MCF 10A (cell line): ENCODE measurements at regions of chr16 and their contacts with region 1.

Region 1: DNA sequence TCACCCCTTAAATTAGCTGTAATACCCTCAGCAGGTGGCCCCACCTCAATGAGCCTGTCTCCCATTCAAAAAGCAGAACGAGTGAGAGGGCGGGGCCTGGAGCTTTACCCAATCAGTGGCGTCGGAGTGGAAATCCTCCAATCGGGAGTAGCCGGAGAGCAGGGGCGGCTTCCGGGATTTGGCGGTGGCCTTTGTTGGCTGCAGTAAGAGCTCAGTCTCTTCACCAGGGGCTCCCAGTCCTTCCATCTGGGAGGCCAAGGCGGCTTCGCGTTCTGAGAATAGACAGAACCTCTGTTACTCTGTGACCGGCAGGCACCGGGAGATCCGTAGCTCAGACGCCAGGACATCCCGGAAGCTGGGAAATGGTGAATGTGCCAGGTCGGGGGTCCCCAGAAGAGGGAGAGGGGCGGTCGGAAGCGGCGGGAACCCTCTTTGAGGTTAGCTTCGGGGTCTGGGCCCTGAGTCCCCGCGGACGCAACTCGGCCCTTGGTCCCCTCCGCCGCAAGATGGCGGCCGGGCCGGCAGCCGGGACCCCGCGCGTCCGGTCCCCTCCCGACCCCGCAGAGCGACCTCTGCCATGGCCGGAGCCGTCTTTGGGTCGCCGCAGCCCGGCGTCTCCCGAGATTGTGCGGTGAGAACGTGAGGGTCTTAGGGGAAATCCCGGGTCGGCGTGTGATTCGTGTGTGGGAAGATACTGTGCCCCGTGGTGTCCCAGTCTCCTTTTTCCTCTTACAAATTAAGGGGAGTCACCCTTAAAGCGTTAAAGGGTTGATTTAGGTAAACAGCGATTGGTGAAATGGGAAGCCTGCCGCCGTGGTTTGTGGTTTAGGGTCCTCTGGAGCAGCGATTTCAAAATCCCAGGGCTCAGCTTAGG is 160.3 kb upstream of the ZNF267 start:
- DNase-seq: peak; percentile 95
- H3K4me3 Mint-ChIP-seq: peak overlapping the region; percentile 96
- H3K27ac Mint-ChIP-seq: peak overlapping the region; percentile 99
- H3K4me1 Mint-ChIP-seq: peaks cover 17% of the 10 kb centered on the region
- H3K27me3 Mint-ChIP-seq: no peaks in the 10 kb centered on the region
- CTCF ChIP-seq: no peak

Region 2: GRCh38 chr16:31507929-31508705 is 205.2 kb before region 1 on chr16 and contains the start of gene RUSF1:
- CTCF ChIA-PET with region 1: no interaction called
- POLR2A ChIA-PET with region 1: interaction called, 10 read pairs
- intact Hi-C with region 1: loop called (anchors 2 kb)
- DNase-seq: peak; percentile 84
- H3K4me3 Mint-ChIP-seq: peak within 1 kb of the TSS; percentile 88
- H3K27ac Mint-ChIP-seq: peak within 1 kb of the TSS; percentile 98
- H3K4me1 Mint-ChIP-seq: peaks cover 22% of the 10 kb centered on the region
- H3K27me3 Mint-ChIP-seq: no peaks in the 10 kb centered on the region
- CTCF ChIP-seq: no peak
- total RNA-seq, gene RUSF1: 72.0 and 88.8 TPM in 2 replicates

Region 3: DNA sequence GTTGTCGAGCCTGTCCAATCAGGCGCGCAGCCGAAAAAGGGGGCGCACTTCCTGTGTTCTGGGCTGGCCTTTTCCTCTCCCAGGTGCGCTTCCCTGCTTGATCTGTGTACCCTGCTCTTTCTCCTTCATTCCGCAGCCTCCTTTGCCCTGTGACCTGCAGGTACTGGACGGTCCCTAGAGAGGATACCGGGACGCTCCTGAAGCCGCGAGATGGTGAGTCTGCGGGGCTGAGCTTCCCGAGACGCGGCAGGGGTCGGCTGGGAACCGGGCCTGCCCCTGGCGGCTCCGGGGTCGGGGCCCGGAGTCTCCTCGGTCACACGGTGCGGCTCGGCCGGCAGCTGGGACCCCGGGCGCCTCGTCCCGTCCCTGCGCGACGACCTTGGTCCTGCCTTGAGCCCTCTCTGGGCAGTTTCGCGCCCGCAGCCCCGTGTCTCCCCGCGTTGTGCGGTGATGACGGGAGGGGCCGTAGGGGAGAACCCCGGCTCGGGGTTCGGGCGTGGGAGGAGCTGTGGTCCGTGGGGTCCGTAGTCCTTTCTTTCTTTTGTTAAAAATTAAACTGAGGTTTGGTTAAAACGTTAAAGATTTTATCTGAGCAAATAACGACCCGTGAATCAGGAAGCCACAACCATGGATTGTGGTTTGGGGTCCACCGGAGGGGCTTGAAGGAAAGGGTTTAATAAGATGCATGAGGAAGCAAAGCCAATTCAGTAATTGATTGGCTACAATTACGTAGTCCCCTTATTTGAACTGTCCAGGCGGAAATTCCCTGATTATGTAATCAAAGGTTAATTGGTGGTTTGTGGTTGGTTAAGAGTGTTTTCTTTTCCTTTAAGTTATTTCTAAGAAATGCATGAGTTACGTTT is 12.6 kb before region 1 on chr16:
- CTCF ChIA-PET with region 1: interaction called, 8 read pairs
- POLR2A ChIA-PET with region 1: interaction called, 27 read pairs
- intact Hi-C with region 1: no loop called
- DNase-seq: peak; percentile 89
- H3K4me3 Mint-ChIP-seq: peak overlapping the region; percentile 87
- H3K27ac Mint-ChIP-seq: peak overlapping the region; percentile 90
- H3K4me1 Mint-ChIP-seq: peaks cover 11% of the 10 kb centered on the region
- H3K27me3 Mint-ChIP-seq: no peaks in the 10 kb centered on the region
- CTCF ChIP-seq: no peak

Region 4: GRCh38 chr16:31868691-31869167 is 155.4 kb after region 1 on chr16:
- CTCF ChIA-PET with region 1: interaction called, 4 read pairs
- POLR2A ChIA-PET with region 1: interaction called, 10 read pairs
- intact Hi-C with region 1: loop called (anchors 2 kb)
- DNase-seq: peak; percentile 81
- H3K4me3 Mint-ChIP-seq: no peak overlapping the region
- H3K27ac Mint-ChIP-seq: no peak overlapping the region
- H3K4me1 Mint-ChIP-seq: peaks cover 8% of the 10 kb centered on the region
- H3K27me3 Mint-ChIP-seq: peaks cover 6% of the 10 kb centered on the region
- CTCF ChIP-seq: peak; percentile 65

Region 5: GRCh38 chr16:31873556-31874365 is 160.5 kb after region 1 on chr16 and contains the start of gene ZNF267:
- CTCF ChIA-PET with region 1: interaction called, 4 read pairs
- POLR2A ChIA-PET with region 1: interaction called, 10 read pairs
- intact Hi-C with region 1: loop called (anchors 2 kb)
- DNase-seq: peak; percentile 96
- H3K4me3 Mint-ChIP-seq: peak within 1 kb of the TSS; percentile 91
- H3K27ac Mint-ChIP-seq: peak within 1 kb of the TSS; percentile 94
- H3K4me1 Mint-ChIP-seq: peaks cover 41% of the 10 kb centered on the region
- H3K27me3 Mint-ChIP-seq: no peaks in the 10 kb centered on the region
- CTCF ChIP-seq: no peak
- total RNA-seq, gene ZNF267: 10.1 and 10.6 TPM in 2 replicates